ENCODE measurements at regions of chr2 and their contacts with region 1.

Region 1: GRCh38 chr2:26345545-26346453 is at the start of gene SELENOI:
- DNase-seq: peak; percentile 100
- ATAC-seq: peak; percentile 94
- H3K4me3 Mint-ChIP-seq: peak within 1 kb of the TSS; percentile 91
- H3K27ac Mint-ChIP-seq: peak within 1 kb of the TSS; percentile 98
- H3K4me1 Mint-ChIP-seq: peaks cover 36% of the 10 kb centered on the region
- H3K27me3 Mint-ChIP-seq: no peaks in the 10 kb centered on the region
- total RNA-seq, gene SELENOI: 26.5 to 42.3 TPM

Region 2: DNA sequence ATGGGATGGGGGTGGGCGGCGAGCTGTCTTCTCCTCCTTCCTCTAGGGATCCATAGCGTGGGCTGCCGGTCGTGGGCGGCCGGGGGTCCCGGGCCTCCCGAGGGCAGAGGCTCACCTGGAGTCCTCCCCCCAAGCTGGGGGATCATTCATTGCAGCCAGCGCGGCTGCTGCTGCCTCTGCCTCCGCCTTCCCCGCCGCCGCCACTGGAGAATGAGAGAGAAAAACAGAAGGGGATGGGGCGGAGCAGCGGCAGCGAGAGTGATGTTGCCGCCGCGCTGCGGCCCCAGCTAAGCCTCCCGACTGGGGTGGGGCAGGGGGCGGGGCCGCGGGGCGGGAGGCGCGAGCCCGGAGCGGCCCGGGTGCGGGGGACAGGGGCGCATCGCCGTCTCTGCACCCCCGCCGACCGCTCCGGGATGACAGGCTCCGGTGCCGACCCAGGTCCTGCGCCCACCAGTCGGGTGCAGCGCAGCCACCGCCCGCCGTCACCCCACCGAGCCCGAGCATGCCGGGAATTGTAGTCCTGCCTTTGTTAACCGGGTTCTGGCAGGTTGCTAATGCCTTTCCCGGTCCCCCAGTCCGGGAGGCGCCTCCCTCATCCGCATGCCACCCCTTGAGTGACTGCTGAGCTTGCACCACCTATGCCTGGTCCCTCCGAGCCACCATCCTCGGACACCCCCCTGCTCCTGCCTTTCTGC is 363.4 kb before region 1 on chr2 and contains the start of gene KIF3C:
- CTCF ChIA-PET with region 1: no interaction called
- POLR2A ChIA-PET with region 1: no interaction called
- intact Hi-C with region 1: loop called in 1 of 2 experiments (anchors 1 kb)
- DNase-seq: peak; percentile 85
- ATAC-seq: peak; percentile 89
- H3K4me3 Mint-ChIP-seq: peak within 1 kb of the TSS; percentile 77
- H3K27ac Mint-ChIP-seq: peak within 1 kb of the TSS; percentile 25
- H3K4me1 Mint-ChIP-seq: peaks cover 4% of the 10 kb centered on the region
- H3K27me3 Mint-ChIP-seq: no peaks in the 10 kb centered on the region
- total RNA-seq, gene KIF3C: 5.2 to 5.3 TPM

Region 3: DNA sequence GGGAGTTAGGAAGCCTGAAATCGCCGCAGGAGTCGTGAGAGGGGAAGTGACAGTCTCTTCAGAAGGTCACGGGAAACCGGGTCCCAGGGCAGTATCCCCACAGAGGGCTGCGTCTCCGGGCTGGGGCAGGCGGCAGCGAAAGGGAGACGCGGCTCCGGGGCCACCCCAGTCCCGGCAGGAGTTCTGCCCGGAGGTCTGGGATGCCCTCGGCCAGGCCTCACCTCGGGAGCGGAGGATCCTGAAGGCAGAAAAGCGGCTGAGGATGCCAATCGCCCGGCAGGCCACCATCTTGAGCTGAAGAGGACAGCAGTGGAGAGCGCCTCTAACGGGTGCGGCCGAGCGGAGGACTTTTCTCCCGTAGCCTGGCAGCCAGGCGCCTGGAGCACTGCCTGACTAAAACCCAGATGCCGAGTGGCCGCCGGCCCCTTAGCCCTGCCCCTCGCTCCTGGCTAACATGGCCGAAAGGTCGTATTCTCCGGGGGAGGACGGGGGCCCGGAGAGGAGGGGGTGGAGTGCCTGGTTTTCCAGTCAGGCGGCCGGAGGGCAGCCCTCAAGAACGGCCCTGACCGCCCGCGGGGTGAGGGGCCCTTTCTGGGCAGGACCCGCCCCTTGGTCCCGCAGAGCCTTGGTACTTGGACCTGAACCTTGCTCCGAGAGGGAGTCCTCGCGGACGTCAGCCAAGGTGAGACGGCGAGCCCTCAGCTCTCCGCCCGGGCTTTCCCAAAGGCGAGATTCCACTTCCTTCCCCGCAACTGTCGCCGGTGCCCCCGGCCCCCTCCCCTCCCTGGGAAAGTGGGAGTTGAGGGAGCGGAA is 101.3 kb before region 1 on chr2 and contains the starts of genes HADHA and HADHB:
- CTCF ChIA-PET with region 1: interaction called, 7 read pairs
- POLR2A ChIA-PET with region 1: interaction called, 23 read pairs
- intact Hi-C with region 1: loop called (anchors 1 to 5 kb)
- DNase-seq: peak; percentile 90
- ATAC-seq: peak; percentile 80
- H3K4me3 Mint-ChIP-seq: peak within 1 kb of the TSS; percentile 99
- H3K27ac Mint-ChIP-seq: peak within 1 kb of the TSS; percentile 98
- H3K4me1 Mint-ChIP-seq: peaks cover 47% of the 10 kb centered on the region
- H3K27me3 Mint-ChIP-seq: no peaks in the 10 kb centered on the region
- total RNA-seq, gene HADHA: 149 to 154 TPM
- total RNA-seq, gene HADHB: 71.4 to 73.4 TPM

Region 4: DNA sequence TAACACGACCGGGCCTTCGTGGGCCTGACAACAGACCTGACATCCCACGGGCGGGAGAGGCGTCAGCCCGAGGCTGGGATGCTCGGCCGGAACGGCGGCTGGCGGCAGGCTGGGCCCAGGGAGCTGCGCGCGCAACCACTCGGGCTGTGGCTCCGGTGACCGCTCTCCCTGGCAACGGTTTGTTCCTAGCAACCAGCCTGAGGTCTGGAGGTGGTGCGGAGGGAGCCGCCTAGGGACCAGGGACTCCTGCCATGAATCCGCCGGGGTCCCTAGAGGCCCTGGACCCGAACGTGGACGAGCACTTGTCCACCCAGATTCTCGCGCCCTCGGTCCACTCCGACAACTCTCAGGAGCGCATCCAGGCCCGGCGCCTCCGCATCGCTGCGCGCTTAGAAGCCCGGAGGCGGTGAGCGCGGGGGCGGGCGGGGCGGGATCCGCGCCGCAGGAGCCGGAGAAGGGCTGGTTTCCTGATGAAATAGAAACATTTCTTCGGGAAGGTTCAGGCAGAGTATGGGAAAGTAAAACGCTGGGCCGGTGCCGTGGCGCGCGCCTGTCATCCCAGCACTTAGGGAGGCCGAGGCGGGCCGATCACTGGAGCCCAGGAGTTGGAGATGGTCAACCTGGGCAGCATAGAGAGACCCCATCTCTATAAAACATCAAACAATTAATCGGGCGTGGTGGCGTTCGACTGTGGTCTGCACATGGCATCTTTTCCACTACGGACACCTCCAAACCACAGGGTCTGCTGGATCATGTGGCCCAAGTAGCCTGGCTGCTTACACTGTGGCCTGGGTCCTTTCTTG is 56.1 kb after region 1 on chr2 and contains the start of gene DRC1:
- CTCF ChIA-PET with region 1: no interaction called
- POLR2A ChIA-PET with region 1: no interaction called
- intact Hi-C with region 1: no loop called
- DNase-seq: peak; percentile 64
- ATAC-seq: peak; percentile 62
- H3K4me3 Mint-ChIP-seq: no peak within 1 kb of the TSS
- H3K27ac Mint-ChIP-seq: no peak within 1 kb of the TSS
- H3K4me1 Mint-ChIP-seq: peaks cover 8% of the 10 kb centered on the region
- H3K27me3 Mint-ChIP-seq: peaks cover 13% of the 10 kb centered on the region
- total RNA-seq, gene DRC1: not detected

Region 5: GRCh38 chr2:26503231-26503880 is 157.6 kb after region 1 on chr2:
- CTCF ChIA-PET with region 1: no interaction called
- POLR2A ChIA-PET with region 1: interaction called, 3 read pairs
- intact Hi-C with region 1: loop called in 1 of 2 experiments (anchors 5 kb)
- DNase-seq: peak; percentile 94
- ATAC-seq: peak; percentile 100
- H3K4me3 Mint-ChIP-seq: peak overlapping the region; percentile 65
- H3K27ac Mint-ChIP-seq: peak overlapping the region; percentile 63
- H3K4me1 Mint-ChIP-seq: peaks cover 3% of the 10 kb centered on the region
- H3K27me3 Mint-ChIP-seq: peaks cover 1% of the 10 kb centered on the region

Region 6: DNA sequence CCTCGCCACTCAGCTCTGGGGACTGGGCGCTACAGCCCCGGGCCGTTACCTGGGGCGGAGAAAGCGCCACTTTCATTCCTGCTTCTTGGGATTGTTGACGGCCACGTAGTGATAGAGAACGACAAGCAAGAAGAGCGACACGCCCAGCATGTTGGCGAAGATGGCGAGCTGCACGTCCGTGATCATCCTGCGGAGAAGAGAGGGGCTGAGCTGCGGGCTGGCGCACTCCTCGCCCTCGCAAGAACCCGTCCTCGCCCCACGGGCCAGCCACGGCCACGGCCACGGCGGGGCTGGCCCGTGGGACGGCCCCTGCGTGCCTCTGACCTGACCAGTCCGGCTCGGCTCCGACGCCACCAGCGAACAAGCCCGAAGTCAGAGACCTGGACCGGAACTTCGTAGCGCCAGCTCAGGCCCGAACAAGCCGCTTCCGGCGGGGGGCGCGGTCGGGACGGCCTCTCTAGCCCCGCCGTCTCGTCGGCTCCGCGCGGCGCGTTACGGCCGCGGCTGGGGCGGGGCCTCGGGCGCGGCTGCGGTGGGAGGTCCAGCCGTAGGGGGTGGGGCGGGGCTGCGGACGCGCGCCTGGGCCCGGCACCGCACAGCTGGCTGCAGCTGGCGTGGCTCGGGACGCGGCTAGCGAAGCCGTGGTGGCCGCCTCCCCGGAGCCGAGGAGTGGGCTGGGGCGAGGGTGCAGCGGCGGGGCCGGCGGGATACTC is 725.6 kb after region 1 on chr2 and contains the start of gene OST4:
- CTCF ChIA-PET with region 1: no interaction called
- POLR2A ChIA-PET with region 1: no interaction called
- intact Hi-C with region 1: loop called in 1 of 2 experiments (anchors 5 kb)
- DNase-seq: peak; percentile 94
- ATAC-seq: peak; percentile 89
- H3K4me3 Mint-ChIP-seq: peak within 1 kb of the TSS; percentile 96
- H3K27ac Mint-ChIP-seq: peak within 1 kb of the TSS; percentile 91
- H3K4me1 Mint-ChIP-seq: peaks cover 66% of the 10 kb centered on the region
- H3K27me3 Mint-ChIP-seq: no peaks in the 10 kb centered on the region
- total RNA-seq, gene OST4: 305 to 406 TPM